Spleen (tissue), 13 donors: ENCODE measurements at regions of chr2 and their contacts with region 1.

Region 1: GRCh38 chr2:11477994-11478393 is 12.0 kb upstream of the E2F6 start:
- DNase-seq: peak; percentile 92
- H3K4me3 ChIP-seq: no peak overlapping the region
- H3K27ac ChIP-seq: no peak overlapping the region
- H3K4me1 ChIP-seq: peaks cover 0 to 14% (median 13%) of the 10 kb centered on the region in 6 donors
- H3K27me3 ChIP-seq: peaks cover 0 to 49% (median 23%) of the 10 kb centered on the region in 7 donors
- CTCF ChIP-seq: peak; percentile 53 to 88 (median 78)
- POLR2A ChIP-seq: no peak

Region 2: DNA sequence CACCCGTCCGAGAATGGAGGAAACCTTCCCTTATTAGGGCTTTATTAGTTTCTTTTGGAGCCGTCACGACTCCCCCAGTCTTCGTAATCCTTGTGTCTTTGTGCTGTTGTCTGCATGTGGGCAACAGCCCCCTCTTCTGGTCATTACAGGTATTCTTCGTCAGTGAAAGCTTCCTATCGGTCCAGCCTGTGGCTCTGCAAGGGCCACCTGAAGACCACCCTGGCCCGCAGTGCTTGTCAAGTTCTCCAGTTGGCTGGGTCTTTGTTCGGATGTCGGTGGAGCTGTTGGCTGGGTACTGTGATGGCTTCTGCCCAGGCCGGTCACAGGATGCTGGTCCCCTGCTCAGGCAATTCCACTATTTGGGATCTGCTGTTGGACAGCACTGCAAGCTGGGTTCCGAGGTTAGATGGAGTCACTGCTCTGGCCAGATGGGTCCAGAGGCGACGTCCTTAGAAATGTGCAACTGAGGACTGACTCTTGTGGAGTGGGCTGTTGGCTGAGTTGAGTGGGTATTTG is 31.2 kb before region 1 on chr2:
- intact Hi-C with region 1: loop called (anchors 2 kb)
- DNase-seq: no peak
- H3K4me3 ChIP-seq: no peak overlapping the region
- H3K27ac ChIP-seq: no peak overlapping the region
- H3K4me1 ChIP-seq: no peaks in the 10 kb centered on the region
- H3K27me3 ChIP-seq: no peaks in the 10 kb centered on the region
- CTCF ChIP-seq: peak; percentile 43 to 85 (median 75)
- POLR2A ChIP-seq: no peak

Region 3: DNA sequence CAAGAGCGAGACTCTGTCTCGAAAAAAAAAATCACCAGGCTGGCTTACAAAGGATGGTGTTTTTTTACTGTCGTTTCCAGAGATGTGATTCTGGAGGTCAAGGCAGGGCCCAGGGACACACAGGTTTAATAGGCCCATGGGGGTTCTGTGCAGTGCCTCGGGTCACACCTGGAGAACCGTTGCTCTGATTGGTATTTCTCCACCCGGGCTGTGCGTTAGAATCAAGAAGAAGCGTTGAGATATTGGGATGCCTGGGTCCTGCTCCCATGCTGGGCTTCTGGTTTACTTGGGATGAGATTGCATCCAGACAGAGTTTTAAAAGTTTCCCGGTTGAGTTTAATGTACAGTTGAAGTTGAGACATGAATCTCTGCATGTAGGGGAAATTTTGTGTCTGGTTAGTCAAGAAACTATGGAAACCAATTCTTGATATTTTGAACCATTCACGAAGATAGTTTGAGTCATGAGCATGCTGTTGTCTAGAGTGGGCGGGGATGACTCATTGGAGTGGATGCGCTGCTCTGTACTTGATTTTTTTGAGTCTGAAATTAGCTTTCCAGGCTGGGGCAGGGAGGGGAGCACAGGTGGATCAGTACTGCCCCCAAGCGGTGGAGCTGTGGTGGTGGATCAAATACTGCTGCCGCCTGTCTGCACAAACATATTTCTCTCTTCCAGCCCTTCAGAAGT is 106.0 kb after region 1 on chr2:
- intact Hi-C with region 1: loop called (anchors 5 kb)
- DNase-seq: peak; percentile 80
- H3K4me3 ChIP-seq: no peak overlapping the region
- H3K27ac ChIP-seq: no peak overlapping the region
- H3K4me1 ChIP-seq: no peaks in the 10 kb centered on the region
- H3K27me3 ChIP-seq: peaks cover 0 to 36% (median 0%) of the 10 kb centered on the region in 7 donors
- CTCF ChIP-seq: peak; percentile 24 to 76 (median 63)
- POLR2A ChIP-seq: no peak

Region 4: DNA sequence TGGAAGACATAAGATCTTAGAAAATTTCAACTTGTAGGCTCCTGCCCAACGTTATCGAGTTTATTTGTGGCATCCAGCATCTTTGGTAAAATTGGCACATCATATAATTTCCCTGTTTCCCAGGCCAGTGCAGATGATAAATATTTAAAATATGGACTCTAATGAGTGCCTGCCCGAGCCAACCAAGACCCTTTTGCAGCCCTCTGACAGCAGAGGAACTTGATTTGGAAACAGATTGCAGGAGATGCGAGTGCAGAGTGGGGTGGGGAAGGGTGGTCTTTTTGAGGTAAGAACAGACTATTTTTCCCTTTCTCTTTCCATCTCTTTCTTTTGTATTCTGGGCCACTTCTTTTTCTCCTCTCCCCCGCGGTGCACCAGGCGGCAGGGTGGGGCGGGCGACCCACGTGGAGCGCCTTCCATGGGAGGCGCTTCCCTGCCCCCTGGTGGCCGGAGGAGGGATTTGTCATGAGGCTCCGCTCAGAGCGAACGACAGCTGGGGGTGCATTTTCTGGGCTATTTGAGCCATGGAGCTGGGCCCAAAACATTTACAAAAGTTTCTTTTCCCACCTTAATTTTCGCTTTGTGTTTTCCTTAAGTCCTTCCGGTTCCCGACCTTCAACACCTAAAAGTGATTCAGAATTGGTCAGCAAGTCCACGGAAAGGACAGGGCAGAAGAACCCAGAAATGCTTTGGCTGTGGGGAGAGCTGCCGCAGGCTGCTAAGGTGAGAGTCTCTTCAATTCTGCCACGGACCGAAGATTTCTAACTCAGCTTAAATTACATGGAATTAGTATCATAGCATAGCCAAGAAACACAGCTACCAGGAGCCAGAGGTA is 301.1 kb after region 1 on chr2:
- intact Hi-C with region 1: loop called (anchors 10 kb)
- DNase-seq: peak; percentile 96
- H3K4me3 ChIP-seq: peak overlapping the region in 4 of 8 donors; percentile 17 to 53 (median 20)
- H3K27ac ChIP-seq: peak overlapping the region in 3 of 8 donors; percentile 48 to 59 (median 58)
- H3K4me1 ChIP-seq: peaks cover 21 to 52% (median 30%) of the 10 kb centered on the region in 6 donors
- H3K27me3 ChIP-seq: no peaks in the 10 kb centered on the region
- CTCF ChIP-seq: peak; percentile 78 to 98 (median 94)
- POLR2A ChIP-seq: no peak

Region 5: DNA sequence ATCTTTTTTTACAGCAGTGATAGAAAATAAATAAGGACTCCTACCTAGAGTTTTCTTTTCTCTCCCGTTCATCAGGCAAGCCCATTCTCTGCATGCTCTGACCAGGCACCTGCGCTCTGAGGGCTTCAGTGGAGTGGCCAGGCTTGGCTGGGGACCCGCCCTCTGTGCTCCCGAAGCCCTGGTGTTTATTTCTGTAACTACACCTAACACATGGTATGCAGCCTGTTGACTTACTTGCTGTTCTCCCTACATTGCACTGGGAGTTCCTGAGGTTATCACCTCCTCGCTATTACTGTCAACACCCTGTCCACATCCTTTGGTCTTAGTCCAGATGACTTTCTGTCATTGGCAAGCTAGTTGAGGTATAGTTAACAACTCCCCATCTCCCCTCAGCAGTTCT is 586.2 kb after region 1 on chr2:
- intact Hi-C with region 1: no loop called
- DNase-seq: no peak
- H3K4me3 ChIP-seq: no peak overlapping the region
- H3K27ac ChIP-seq: no peak overlapping the region
- H3K4me1 ChIP-seq: peaks cover 0 to 30% (median 9%) of the 10 kb centered on the region in 6 donors
- H3K27me3 ChIP-seq: no peaks in the 10 kb centered on the region
- CTCF ChIP-seq: peak in 4 of 11 experiments; percentile 12 to 37 (median 19)
- POLR2A ChIP-seq: no peak